Activated CD4-positive, alpha-beta T cell treated with anti-CD3 and anti-CD28 coated beads, Interleukin-2, amount 10 ng/mL, durations not matched to agents 7 days and 5 days (primary cell): ENCODE measurements at regions of chr1 and their contacts with region 1.

Region 1: GRCh38 chr1:35592991-35593694 is 20.0 kb downstream of the TFAP2E start:
- DNase-seq: no peak
- H3K4me3 Mint-ChIP-seq: no peak overlapping the region
- H3K27ac Mint-ChIP-seq: peak overlapping the region; percentile 38
- H3K4me1 Mint-ChIP-seq: peaks cover 14% of the 10 kb centered on the region
- H3K27me3 Mint-ChIP-seq: no peaks in the 10 kb centered on the region

Region 2: GRCh38 chr1:35287807-35288640 is 305.1 kb before region 1 on chr1:
- CTCF ChIA-PET with region 1: no interaction called
- POLR2A ChIA-PET with region 1: no interaction called
- DNase-seq: no peak
- H3K4me3 Mint-ChIP-seq: no peak overlapping the region
- H3K27ac Mint-ChIP-seq: no peak overlapping the region
- H3K4me1 Mint-ChIP-seq: peaks cover 37% of the 10 kb centered on the region
- H3K27me3 Mint-ChIP-seq: no peaks in the 10 kb centered on the region

Region 3: GRCh38 chr1:35605071-35605881 is 12.1 kb after region 1 on chr1:
- CTCF ChIA-PET with region 1: interaction called, 11 read pairs
- POLR2A ChIA-PET with region 1: no interaction called
- DNase-seq: no peak
- H3K4me3 Mint-ChIP-seq: no peak overlapping the region
- H3K27ac Mint-ChIP-seq: no peak overlapping the region
- H3K4me1 Mint-ChIP-seq: peaks cover 11% of the 10 kb centered on the region
- H3K27me3 Mint-ChIP-seq: no peaks in the 10 kb centered on the region